ENCODE measurements at regions of chr4 and their contacts with region 1.

Region 1: GRCh38 chr4:56840559-56840958 is 19.1 kb upstream of the SPINK2 start:
- DNase-seq: no peak
- ATAC-seq: no peak
- H3K4me3 Mint-ChIP-seq: no peak overlapping the region
- H3K27ac Mint-ChIP-seq: no peak overlapping the region
- H3K4me1 Mint-ChIP-seq: peaks cover 11% of the 10 kb centered on the region
- H3K27me3 Mint-ChIP-seq: no peaks in the 10 kb centered on the region

Region 2: DNA sequence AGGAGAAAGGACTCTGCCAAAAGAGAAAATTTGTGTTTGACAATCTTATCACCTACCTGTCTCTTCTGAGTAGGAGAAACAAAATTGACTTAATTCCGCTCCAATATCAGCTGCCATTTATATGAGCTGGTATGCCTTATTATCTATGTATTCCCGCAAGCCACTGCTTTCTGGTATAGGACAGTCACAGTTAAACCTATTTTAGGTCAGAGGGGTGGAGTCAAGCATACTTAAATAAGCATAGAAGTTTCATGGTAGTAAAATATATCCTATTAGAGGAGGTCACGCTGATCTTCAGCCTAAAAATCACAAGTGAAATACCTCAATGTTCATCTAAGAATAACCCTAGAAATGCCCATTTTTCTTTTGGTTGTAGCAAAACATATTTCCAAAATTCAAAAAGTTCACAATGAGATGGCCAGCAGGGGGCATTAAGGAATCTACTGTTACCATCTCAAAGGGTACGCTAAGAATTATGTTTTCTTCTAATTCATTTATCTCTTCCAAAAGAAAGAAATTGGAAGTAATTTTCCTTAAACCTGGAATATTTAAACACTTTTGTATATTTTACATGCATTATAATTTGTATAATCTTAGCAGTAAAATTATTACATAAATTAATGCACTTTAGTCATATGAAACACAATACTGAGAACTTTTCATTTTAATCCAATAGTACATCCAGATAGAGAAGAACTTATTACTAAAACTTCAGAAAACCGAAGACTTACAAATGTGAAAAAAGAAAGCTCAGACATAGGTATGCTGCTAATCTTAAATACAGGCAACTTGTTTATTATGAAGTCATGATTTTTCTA is 415.7 kb before region 1 on chr4:
- CTCF ChIA-PET with region 1: interaction called, 29 read pairs
- POLR2A ChIA-PET with region 1: no interaction called
- DNase-seq: peak; percentile 55
- ATAC-seq: no peak
- H3K4me3 Mint-ChIP-seq: no peak overlapping the region
- H3K27ac Mint-ChIP-seq: no peak overlapping the region
- H3K4me1 Mint-ChIP-seq: peaks cover 20% of the 10 kb centered on the region
- H3K27me3 Mint-ChIP-seq: no peaks in the 10 kb centered on the region

Region 3: DNA sequence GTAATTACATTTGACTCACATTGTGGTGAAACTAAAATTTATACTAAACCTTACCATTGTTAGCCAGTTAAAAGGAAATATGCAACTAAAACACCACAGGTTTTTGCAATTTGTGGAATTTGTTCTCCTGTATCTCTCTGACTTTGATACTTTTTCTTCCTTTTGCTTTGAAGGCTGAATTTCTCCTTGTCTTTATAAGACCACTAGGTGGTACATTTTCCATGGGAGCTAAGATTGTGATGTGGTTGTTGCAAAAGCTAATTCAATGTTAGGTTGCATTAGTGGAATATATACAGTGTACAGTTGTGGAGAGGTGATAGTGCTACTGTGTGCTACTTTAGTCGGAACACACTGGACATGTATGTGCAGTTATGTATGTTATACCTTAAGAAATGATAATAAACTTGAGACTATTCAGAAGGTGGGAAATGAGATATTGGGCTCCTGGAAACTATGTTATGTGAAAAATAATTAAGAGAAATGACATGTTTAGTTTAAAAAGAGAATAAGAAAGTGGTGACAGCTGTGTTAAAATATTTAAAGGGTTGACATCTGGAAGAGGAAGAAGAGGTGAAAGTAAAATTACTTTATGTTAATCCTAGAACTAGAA is 264.6 kb before region 1 on chr4:
- CTCF ChIA-PET with region 1: interaction called, 25 read pairs
- POLR2A ChIA-PET with region 1: no interaction called
- DNase-seq: no peak
- ATAC-seq: no peak
- H3K4me3 Mint-ChIP-seq: no peak overlapping the region
- H3K27ac Mint-ChIP-seq: no peak overlapping the region
- H3K4me1 Mint-ChIP-seq: peaks cover 9% of the 10 kb centered on the region
- H3K27me3 Mint-ChIP-seq: peaks cover 6% of the 10 kb centered on the region

Region 4: GRCh38 chr4:56655209-56655626 is 185.3 kb before region 1 on chr4:
- CTCF ChIA-PET with region 1: interaction called, 10 read pairs
- POLR2A ChIA-PET with region 1: no interaction called
- DNase-seq: peak; percentile 30
- ATAC-seq: peak; percentile 20
- H3K4me3 Mint-ChIP-seq: peak overlapping the region; percentile 89
- H3K27ac Mint-ChIP-seq: peak overlapping the region; percentile 82
- H3K4me1 Mint-ChIP-seq: peaks cover 63% of the 10 kb centered on the region
- H3K27me3 Mint-ChIP-seq: peaks cover 19% of the 10 kb centered on the region

Region 5: DNA sequence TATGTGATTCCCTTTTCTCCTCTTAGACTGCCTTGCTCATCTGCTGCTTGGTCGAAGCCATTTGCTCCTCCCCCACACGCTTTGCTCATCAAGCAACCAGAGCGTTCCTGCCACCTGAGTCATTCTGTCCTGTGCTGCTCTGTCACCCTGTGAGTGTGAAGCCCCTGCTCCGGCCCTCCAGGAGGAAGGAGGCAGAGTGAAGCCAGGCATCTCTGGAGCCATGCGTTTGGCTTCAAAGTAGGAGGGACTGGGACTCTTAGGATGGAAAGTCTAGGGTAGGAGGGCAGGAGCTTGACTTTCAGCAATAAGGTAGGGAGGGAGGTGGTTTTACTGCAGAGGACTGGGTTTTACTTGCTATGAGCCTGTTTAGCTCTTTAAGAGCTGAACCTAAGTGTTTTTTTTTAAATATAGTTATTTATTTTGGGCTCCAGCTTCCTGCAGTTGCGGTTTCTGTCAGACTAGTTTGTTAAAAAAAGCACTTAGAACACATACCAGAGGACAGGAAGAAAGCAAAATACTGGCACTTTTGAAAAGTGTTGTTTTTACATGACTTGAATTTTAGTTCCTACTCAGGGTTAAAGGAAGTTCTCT is 82.6 kb before region 1 on chr4:
- CTCF ChIA-PET with region 1: interaction called, 11 read pairs
- POLR2A ChIA-PET with region 1: no interaction called
- DNase-seq: peak; percentile 82
- ATAC-seq: peak; percentile 94
- H3K4me3 Mint-ChIP-seq: peak overlapping the region; percentile 62
- H3K27ac Mint-ChIP-seq: peak overlapping the region; percentile 98
- H3K4me1 Mint-ChIP-seq: peaks cover 37% of the 10 kb centered on the region
- H3K27me3 Mint-ChIP-seq: peaks cover 6% of the 10 kb centered on the region

Region 6: GRCh38 chr4:56799824-56800756 is 40.5 kb before region 1 on chr4:
- CTCF ChIA-PET with region 1: interaction called, 32 read pairs
- POLR2A ChIA-PET with region 1: interaction called, 3 read pairs
- DNase-seq: peak; percentile 91
- ATAC-seq: peak; percentile 95
- H3K4me3 Mint-ChIP-seq: peak overlapping the region; percentile 83
- H3K27ac Mint-ChIP-seq: peak overlapping the region; percentile 68
- H3K4me1 Mint-ChIP-seq: peaks cover 40% of the 10 kb centered on the region
- H3K27me3 Mint-ChIP-seq: peaks cover 8% of the 10 kb centered on the region

Region 7: DNA sequence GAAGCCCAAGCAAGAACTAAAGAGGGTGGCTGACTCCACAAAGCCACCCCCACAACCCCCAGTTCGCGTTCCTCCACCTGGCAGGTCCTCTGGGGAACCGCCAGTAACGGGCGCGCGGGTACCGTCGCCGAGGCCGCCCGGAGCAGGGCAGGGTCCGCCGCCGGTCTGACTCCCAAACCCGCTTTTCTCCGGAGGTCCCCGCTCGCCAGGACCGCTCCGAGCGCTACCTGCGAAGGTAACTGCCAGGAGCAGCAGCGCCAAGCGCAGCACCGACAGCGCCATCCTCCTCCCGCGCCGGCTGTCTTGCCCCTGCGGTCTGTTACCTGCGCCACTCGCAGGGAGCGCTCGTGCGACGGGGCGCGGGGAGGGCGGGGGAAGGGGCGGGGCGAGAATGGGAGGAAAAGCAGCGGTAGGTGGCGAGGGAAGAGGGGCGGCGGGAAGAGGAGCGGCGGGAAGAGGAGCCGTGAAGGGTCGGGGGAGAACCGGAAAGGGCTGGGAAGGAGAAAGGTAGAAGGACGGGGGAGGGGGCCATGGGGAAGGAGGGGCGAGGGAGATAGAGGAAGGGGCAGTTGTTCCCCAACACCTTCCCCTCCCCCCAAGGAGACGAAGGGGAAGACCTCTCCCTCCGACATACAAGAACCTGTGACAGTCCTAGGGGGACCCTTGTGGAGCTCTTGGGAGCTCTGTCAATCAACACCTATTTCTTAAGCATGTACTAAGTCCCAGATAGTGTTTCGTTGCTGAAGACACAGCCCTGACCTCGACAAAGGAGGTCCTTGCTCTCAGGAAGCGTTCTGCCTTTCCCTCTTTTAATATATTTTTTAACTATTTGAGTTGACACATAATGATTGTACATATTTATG is 18.9 kb before region 1 on chr4 and contains the start of gene SPINK2:
- CTCF ChIA-PET with region 1: interaction called, 14 read pairs
- POLR2A ChIA-PET with region 1: no interaction called
- DNase-seq: peak; percentile 73
- ATAC-seq: peak; percentile 83
- H3K4me3 Mint-ChIP-seq: peak within 1 kb of the TSS; percentile 71
- H3K27ac Mint-ChIP-seq: no peak within 1 kb of the TSS
- H3K4me1 Mint-ChIP-seq: peaks cover 35% of the 10 kb centered on the region
- H3K27me3 Mint-ChIP-seq: peaks cover 26% of the 10 kb centered on the region
- total RNA-seq, gene SPINK2: 5.7 to 9.4 TPM

Region 8: DNA sequence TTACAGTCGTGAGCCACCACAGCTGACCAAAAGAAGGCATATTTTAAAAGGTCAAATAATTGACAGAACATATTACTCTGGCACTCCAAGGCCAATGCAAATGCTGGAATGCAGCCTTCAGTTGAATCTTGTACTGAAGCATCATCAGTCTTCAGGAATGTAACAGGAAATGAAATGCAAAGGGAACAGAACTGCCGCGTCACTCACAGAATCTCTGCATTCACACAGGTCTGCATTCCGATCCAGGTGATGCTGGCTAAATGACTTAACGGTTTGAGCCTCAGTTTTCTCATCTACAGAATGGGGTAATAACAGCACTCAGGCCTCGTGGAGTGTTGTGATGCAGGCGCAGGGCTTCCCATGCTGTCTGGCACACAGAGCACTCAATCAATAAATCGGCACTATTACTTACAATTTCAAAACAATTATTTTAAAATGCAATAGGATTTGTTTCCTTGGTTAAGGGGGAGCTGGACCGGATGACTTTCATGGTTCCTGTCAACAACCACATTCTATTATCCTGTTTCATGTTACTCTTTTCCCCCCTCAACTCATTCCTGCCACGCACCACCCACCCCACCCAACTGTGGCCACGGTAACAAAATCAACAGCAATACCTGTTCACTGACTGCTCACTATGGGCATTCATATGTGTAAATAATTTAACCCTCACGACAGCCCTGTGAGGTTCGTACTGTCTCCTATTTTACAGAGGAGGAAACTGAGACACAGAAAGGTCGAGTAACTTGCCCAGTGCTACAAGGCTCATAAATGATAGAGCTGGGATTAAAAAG is 237.2 kb after region 1 on chr4:
- CTCF ChIA-PET with region 1: no interaction called
- POLR2A ChIA-PET with region 1: no interaction called
- DNase-seq: no peak
- ATAC-seq: no peak
- H3K4me3 Mint-ChIP-seq: no peak overlapping the region
- H3K27ac Mint-ChIP-seq: no peak overlapping the region
- H3K4me1 Mint-ChIP-seq: no peaks in the 10 kb centered on the region
- H3K27me3 Mint-ChIP-seq: peaks cover 23% of the 10 kb centered on the region